Posterior vena cava (tissue), 2 donors: ENCODE measurements at regions of chr14 and their contacts with region 1.

Region 1: DNA sequence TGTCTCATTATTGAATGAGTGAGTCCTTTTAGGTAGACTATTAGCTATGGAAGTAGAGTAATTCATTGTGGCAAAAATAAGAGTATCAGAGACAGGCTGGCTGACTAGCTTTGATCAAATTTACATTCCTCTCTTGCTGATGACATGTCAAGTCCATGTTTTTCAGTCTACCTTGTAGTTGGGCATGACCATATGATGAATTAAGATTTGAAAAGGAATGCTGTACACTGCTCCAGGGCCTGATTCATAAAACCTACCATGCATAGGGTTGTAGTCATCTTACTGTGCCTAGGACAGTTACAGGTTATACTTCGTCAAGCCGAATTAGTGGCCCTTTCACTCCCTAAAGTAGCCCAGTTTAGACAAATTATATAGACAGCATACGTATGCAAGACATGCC is 545.7 kb upstream of the MIS18BP1 start:
- DNase-seq: no peak

Region 2: DNA sequence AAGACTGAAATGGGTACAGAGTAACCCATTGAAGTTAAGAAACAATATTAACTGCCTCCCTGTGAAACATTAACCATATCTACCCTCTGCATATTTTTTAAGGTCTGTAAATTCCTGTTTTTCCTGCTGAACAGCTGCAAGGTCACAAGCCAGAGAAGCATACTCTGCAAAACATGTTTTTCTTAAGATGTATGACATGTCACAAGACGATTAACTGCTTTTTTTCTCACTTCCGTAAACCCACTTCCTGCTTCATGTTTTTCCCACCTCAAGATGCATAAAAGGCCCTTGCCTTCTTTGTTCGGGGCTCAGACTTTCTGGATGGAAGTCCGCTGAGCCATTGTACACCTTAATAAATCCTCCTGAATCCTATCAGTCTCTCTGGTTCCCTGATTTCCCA is 41.0 kb before region 1 on chr14:
- intact Hi-C with region 1: loop called in 1 of 2 experiments (anchors 2 kb)
- DNase-seq: no peak